Posterior vena cava (tissue), 2 donors: ENCODE measurements at regions of chr2 and their contacts with region 1.

Region 1: DNA sequence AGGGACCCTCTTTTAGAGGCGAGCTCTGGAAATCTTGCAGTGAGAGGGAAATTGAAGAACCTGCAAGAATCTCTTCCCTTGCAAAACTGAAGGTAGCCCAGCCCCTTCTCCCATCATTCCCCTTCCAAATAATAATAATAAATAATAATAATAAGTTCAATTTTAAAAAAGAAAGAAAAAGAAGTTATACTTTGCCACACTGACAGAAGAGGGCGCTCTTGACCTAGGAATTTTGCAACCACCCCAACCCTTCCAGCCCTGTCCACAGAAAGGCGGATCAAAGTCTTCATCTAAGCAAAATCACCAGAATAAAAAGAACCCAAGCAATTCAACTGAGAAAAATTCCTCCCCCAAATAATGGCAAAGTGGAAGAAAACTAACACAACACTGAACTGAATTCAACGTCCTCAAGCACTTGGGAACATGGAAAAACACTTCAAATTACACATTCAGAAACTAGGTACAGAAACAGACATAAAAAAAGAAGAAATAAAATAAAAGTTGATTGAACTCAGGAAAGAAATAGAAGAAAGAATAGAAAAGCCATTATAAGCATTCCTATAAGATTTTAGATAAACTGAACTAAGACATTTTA is 98.9 kb upstream of the GLS start:
- DNase-seq: no peak

Region 2: DNA sequence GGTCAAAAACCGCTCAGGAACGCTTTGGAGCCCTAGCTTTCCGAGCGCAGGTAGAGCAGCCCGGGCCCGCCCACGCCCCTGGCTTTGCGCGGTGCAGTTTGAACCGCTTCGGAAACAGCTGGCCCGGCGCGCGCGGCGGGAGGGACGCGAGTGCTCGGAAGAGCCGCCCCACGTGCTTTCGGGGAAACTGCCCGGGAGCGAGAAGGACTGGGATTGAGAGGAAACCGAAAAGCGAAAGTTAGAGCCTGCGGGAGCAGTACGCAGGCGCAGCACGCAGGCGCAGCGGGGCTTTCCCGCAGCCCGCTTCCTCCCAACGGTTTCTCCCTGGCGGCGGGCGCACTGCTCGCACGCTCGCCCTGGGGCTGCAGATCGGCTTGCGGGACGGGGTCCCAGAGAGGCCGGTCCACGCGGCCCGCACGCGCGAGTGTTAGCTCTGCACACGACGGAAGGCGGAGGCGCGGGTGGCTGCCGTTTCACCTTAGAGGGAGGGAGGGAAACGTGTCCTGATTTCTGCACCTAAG is 238.6 kb after region 1 on chr2:
- intact Hi-C with region 1: loop called in 1 of 2 experiments (anchors 10 kb)
- DNase-seq: peak; percentile 97

Region 3: GRCh38 chr2:191030521-191031154 is 248.9 kb after region 1 on chr2:
- intact Hi-C with region 1: loop called (anchors 5 to 10 kb)
- DNase-seq: no peak

Region 4: DNA sequence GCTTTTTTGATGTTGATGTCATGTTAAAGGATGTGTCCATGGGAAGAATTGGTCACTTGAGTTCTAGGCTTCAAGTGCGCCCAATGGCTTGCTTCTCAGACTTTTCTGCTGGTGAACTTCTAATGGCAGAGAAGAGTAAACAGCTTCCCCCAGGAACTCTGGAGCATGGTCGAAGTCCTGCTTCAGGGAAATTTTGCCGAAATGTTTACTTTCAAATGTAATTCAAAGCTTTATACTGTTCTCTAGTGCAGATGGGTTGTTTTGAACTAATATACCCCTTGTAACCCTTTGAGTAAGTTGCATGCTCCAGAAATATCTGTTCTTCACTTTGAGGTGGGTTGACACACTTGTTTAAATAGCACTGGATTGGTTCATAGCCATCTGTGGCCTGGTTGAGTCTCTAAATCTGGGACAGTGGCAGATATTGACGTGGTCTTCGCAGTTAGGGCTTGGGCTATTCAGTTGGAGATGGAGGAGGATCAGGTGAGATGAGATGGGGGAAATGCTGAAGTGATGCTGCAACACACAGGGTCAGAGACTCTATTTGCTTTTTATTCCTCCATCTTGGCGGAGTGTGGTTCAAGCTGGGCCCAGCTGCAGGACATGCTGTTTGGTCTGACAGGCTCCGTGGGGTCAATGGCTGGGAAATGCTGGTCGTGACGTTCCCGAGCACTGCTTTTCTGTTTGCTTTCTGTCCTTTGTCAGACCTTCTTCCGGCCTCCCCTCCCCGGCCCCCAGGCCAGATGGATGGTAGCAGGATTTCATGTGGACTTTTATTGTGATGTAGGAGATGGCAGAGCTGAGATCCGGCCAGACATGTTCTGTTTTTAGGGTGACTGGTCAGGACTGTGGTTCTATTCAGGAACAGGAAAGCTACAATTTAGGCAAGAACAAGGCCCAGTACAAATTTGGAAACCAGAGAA is 499.4 kb after region 1 on chr2:
- intact Hi-C with region 1: no loop called
- DNase-seq: no peak